Vagina (tissue), 2 donors: ENCODE measurements at regions of chr1 and their contacts with region 1.

Region 1: DNA sequence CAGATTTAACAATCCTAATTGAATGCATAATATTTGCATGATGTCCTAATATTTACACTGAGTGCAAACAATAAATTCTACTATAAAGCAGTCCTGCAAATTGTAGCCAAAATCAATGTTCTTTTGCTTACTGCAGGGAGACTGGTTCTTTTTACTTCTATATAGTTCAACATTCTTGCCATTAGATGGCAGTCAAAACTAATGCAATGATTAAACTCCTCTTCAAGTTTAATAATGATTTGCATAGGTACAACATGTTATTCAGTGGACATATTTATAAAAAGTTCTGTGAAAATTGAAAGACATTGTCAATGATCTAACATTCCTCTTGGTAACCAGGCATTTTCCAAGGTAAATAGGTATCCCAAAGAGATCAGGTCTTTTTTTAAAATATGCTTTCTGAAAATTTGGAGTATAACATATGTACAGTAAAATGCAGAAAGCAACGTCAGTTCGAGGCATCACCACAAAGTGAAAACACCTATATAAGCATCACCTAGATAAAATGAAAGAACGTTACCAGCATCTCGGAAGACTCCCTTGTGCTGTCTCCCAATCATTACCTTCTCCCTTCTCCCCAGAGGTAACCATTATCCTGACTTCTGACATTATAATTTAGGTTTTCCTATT is 9.8 kb upstream of the FNBP1L start:
- DNase-seq: no peak
- H3K4me3 ChIP-seq: no peak overlapping the region
- H3K27ac ChIP-seq: no peak overlapping the region
- H3K4me1 ChIP-seq: no peaks in the 10 kb centered on the region
- H3K27me3 ChIP-seq: no peaks in the 10 kb centered on the region
- CTCF ChIP-seq: peak; percentile 35 to 61 (median 53)
- POLR2A ChIP-seq: no peak

Region 2: GRCh38 chr1:93471911-93472310 is 33.8 kb after region 1 on chr1:
- intact Hi-C with region 1: no loop called
- DNase-seq: no peak
- H3K4me3 ChIP-seq: no peak overlapping the region
- H3K27ac ChIP-seq: no peak overlapping the region
- H3K4me1 ChIP-seq: peaks cover 15% of the 10 kb centered on the region
- H3K27me3 ChIP-seq: no peaks in the 10 kb centered on the region
- CTCF ChIP-seq: no peak
- POLR2A ChIP-seq: no peak

Region 3: DNA sequence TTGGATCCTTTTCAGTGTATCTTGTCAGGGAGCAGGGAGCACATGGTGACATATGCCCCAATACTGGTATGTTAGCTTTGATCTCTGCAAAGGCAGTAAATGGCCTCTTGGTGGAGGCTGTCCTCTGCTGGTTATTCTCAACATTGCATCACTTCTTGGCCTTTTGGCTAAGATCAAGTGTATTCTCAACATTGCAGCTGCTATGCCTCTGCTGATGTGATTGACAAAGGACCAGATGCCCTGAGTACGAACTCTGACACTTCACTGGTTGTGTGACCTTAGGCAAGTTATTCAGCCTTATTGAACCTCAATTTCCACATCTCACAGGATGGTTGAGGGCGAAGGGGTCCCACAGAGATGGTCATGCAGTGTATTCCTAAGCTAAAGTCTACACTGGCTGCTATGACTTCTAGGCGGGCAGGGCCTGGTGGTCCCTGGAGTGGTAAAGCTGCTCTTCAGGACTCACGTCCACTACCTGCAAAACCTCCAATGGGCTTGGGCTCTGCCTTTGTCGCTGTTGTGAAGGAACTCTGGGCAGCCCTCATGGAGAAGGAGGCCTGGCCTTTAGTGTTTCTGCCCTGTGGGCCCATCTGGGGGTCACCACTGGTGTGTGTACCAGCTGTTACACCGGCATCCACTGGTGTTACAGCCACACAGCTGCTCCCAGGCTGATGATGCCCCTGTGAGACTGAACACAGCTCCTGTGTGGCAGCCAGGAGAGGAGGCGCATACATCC is 376.1 kb after region 1 on chr1:
- intact Hi-C with region 1: loop called (anchors 5 kb)
- DNase-seq: no peak
- H3K4me3 ChIP-seq: no peak overlapping the region
- H3K27ac ChIP-seq: no peak overlapping the region
- H3K4me1 ChIP-seq: peaks cover 40% of the 10 kb centered on the region
- H3K27me3 ChIP-seq: no peaks in the 10 kb centered on the region
- CTCF ChIP-seq: peak in 2 of 3 experiments; percentile 87 to 97
- POLR2A ChIP-seq: no peak

Region 4: DNA sequence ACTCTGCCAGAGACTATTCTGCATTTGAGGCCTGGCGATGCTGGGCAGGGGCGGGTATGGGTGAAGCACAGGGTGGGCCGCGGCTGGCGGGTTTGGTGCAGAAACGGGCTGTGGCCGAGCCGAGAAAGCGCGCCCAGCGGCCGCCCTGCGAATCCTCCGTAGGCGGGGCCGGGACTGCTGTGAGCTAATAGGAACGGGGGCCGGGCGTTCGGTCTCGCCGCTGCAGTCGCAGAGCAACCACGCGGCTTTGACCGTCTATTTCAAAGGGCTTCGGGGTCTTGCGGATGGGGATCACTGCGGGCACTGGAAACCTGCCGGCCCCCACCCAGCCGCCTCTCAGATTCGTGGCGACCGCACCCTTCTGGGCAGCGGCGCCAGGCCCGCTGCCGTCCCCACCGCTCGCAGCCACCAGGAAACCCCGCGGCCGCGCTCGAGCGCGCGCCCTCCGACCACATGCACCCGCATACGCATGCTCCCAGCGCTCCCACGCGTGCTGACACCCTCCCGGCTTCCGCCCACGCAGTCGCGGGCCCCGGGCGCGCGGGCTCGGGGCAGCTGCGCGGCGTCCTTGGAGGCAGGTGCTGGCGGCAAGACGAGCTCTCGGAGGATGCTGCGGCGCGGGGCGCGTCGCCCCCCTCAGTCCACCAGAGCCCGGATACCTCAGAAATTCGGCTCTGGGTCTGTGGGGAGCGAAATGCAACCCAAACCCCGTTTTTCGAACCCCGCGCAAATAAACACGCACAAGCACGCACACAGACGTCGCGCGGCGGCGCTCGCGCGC is 408.3 kb after region 1 on chr1:
- intact Hi-C with region 1: loop called (anchors 10 kb)
- DNase-seq: peak in 1 of 2 donors; percentile 91
- H3K4me3 ChIP-seq: peak overlapping the region; percentile 76 to 82
- H3K27ac ChIP-seq: peak overlapping the region; percentile 97
- H3K4me1 ChIP-seq: peaks cover 20% of the 10 kb centered on the region
- H3K27me3 ChIP-seq: no peaks in the 10 kb centered on the region
- CTCF ChIP-seq: peak in 2 of 3 experiments; percentile 26 to 35
- POLR2A ChIP-seq: peak in 1 of 2 donors; percentile 28